Right lobe of liver (tissue), 6 donors: ENCODE measurements at regions of chr1 and their contacts with region 1.

Region 1: GRCh38 chr1:56448529-56449300 is 130.6 kb downstream of the PLPP3 start:
- DNase-seq: peak; percentile 62 to 88 (median 75)
- ATAC-seq: peak; percentile 24 to 63 (median 42)
- H3K4me3 ChIP-seq: no peak overlapping the region
- H3K27ac ChIP-seq: peak overlapping the region; percentile 75 to 94 (median 80)
- H3K4me1 ChIP-seq: peaks cover 0 to 82% (median 35%) of the 10 kb centered on the region in 4 donors
- H3K27me3 ChIP-seq: no peaks in the 10 kb centered on the region
- CTCF ChIP-seq: no peak
- POLR2A ChIP-seq: peak; percentile 42

Region 2: GRCh38 chr1:56416471-56416882 is 32.2 kb before region 1 on chr1:
- intact Hi-C with region 1: loop called in 1 of 2 experiments (anchors 5 kb)
- DNase-seq: no peak
- ATAC-seq: peak; percentile 1 to 24 (median 2)
- H3K4me3 ChIP-seq: no peak overlapping the region
- H3K27ac ChIP-seq: peak overlapping the region in 1 of 3 donors; percentile 96
- H3K4me1 ChIP-seq: peaks cover 0 to 35% (median 17%) of the 10 kb centered on the region in 4 donors
- H3K27me3 ChIP-seq: no peaks in the 10 kb centered on the region
- CTCF ChIP-seq: peak in 3 of 4 donors; percentile 6 to 41 (median 36)
- POLR2A ChIP-seq: no peak

Region 3: DNA sequence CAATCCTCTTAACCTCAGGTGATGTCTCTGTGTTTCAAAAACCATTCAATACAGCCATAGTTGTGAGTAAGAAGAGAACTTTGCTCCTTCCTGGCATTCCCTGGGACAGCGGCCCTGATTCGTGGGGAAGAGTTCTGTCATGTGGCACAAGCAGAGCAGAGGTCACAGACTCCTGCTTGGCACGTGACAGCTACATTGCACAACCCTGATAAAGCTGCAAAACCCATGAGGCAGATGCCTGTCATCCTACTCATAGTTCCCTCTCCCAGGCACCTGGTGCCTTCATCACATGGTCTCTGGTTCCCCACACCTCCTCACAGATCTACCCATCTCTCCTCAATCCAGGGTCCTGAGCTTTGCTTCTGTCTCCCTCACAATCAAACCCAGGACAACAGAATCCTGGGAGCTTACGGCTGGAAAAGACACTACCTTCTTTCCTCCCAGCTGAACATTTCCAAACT is 59.8 kb after region 1 on chr1:
- intact Hi-C with region 1: loop called in 1 of 2 experiments (anchors 2 kb)
- DNase-seq: peak; percentile 88 to 97 (median 93)
- ATAC-seq: peak; percentile 73 to 87 (median 80)
- H3K4me3 ChIP-seq: no peak overlapping the region
- H3K27ac ChIP-seq: peak overlapping the region; percentile 76 to 87 (median 79)
- H3K4me1 ChIP-seq: peaks cover 0 to 72% (median 35%) of the 10 kb centered on the region in 4 donors
- H3K27me3 ChIP-seq: no peaks in the 10 kb centered on the region
- CTCF ChIP-seq: no peak
- POLR2A ChIP-seq: peak; percentile 48

Region 4: DNA sequence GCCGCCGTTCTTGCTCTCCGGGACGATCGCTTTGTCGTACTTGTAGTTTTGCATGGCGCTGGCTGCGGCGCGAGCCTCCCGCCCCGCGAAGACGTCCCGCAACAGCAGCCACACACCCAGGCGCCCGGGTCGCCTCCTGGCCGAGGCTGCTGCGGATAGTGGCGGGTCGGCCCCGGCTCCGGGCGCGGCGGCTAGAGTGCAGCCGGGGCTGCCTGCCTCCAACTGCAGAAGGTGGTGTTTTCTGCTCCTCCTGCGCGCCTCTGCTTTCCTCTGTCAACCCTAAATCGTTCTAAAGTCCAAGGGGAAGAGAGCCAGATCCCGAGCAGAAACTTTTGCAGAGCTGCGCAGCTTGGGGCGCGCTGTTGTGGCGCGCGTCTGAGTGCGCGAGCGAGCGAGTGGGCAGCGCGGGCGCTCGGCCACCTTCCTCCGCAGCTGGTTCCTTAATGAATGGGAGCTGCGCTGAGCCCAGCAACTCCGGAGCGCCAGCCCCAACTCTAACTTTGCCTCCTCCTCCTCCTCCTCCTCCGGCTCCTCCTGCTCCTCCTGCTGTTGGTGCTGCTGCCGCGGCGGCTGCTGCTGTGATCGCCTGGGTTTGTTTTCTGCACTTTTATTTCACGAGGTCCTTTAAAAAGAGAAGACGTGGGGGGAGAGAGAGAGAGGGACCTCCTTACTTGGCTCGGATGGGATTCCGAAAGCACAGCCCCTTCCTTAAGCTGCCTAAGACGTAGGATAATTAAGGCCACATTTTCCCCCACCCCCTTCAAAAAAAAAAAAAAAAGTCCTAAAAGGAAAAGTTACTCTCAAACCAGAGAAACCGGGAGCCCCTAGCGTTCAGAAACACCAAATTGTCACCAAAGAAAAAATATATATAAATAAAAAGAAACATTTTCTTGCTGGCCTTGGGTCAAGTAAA is 130.5 kb after region 1 on chr1 and contains the start of gene PLPP3:
- intact Hi-C with region 1: loop called in 1 of 2 experiments (anchors 5 kb)
- DNase-seq: peak; percentile 84 to 90 (median 88)
- ATAC-seq: peak; percentile 75 to 88 (median 84)
- H3K4me3 ChIP-seq: peak within 1 kb of the TSS; percentile 71 to 91 (median 82)
- H3K27ac ChIP-seq: peak within 1 kb of the TSS; percentile 97 to 99 (median 99)
- H3K4me1 ChIP-seq: peaks cover 0 to 27% (median 0%) of the 10 kb centered on the region in 4 donors
- H3K27me3 ChIP-seq: no peaks in the 10 kb centered on the region
- CTCF ChIP-seq: peak in 3 of 4 donors; percentile 49 to 60 (median 51)
- POLR2A ChIP-seq: peak; percentile 95
- total RNA-seq, gene PLPP3: 47.8 to 118 (median 65.8) TPM